ENCODE measurements at regions of chr3 and their contacts with region 1.

Region 1: DNA sequence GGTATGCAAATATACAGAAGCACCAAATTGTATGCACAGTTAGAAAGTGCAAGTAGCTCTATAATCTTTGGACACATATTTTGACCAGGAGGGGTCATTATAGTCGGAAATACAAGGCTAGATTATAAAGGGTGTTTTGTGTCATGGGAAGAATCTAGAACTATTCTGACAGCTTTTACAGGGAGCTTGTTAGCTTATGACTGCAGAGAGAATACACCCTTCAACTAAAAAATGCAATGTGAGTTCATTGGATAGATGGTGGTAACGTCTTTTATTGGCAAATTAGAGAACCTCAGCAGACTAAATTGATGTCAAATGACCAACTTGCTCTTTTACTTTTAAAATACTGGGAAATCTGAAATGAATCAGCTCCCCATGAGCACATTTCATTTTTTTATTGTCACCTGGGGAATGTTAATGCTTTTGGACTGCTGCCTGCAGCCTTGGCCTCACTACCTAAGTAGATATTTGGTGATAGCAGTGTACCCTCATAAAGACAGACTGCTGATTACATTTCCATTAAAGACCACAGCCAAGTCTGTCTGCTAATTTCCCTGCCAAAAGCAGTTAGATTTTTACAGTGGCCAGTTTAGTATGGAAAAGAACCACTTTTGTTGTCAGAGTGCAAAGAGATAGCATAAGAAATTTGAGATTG is 515.9 kb upstream of the DPPA4 start:
- DNase-seq: no peak
- H3K4me3 ChIP-seq: no peak overlapping the region
- H3K27ac ChIP-seq: no peak overlapping the region
- H3K4me1 ChIP-seq: no peaks in the 10 kb centered on the region
- H3K27me3 ChIP-seq: no peaks in the 10 kb centered on the region
- CTCF ChIP-seq: no peak
- POLR2A ChIP-seq: no peak

Region 2: GRCh38 chr3:109874896-109875708 is 21.9 kb after region 1 on chr3:
- intact Hi-C with region 1: no loop called
- DNase-seq: no peak
- H3K4me3 ChIP-seq: no peak overlapping the region
- H3K27ac ChIP-seq: no peak overlapping the region
- H3K4me1 ChIP-seq: no peaks in the 10 kb centered on the region
- H3K27me3 ChIP-seq: no peaks in the 10 kb centered on the region
- CTCF ChIP-seq: no peak
- POLR2A ChIP-seq: no peak

Region 3: DNA sequence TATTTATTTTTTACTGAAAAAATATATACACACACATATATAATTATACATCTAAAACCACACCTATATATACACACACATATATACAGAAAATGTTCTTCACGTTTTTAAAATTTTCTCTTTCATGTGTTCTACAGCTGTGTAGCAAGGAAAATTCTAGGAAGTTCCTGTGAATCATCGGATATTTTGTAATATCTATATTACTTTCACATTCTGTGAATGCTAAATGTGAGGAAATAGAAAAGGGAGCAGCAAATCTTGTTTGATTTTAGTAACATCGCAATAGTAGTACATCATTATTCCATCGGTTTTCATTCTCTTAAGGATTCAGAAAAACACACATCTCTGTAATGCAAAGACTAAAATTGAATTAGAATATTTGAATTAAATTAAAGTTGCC is 381.6 kb after region 1 on chr3:
- intact Hi-C with region 1: loop called (anchors 5 kb)
- DNase-seq: no peak
- H3K4me3 ChIP-seq: no peak overlapping the region
- H3K27ac ChIP-seq: no peak overlapping the region
- H3K4me1 ChIP-seq: no peaks in the 10 kb centered on the region
- H3K27me3 ChIP-seq: no peaks in the 10 kb centered on the region
- CTCF ChIP-seq: no peak
- POLR2A ChIP-seq: no peak

Measured in breast epithelium (tissue), 4 donors.